Breast epithelium (tissue), 4 donors: ENCODE measurements at regions of chr2 and their contacts with region 1.

Region 1: GRCh38 chr2:121228521-121228920 is 56.5 kb downstream of the TFCP2L1 start:
- DNase-seq: no peak
- H3K4me3 ChIP-seq: no peak overlapping the region
- H3K27ac ChIP-seq: no peak overlapping the region
- H3K4me1 ChIP-seq: no peaks in the 10 kb centered on the region
- H3K27me3 ChIP-seq: no peaks in the 10 kb centered on the region
- CTCF ChIP-seq: no peak
- POLR2A ChIP-seq: no peak

Region 2: GRCh38 chr2:121254748-121255147 is 26.2 kb after region 1 on chr2:
- intact Hi-C with region 1: no loop called
- DNase-seq: no peak
- H3K4me3 ChIP-seq: no peak overlapping the region
- H3K27ac ChIP-seq: peak overlapping the region in 1 of 2 donors; percentile 23
- H3K4me1 ChIP-seq: no peaks in the 10 kb centered on the region
- H3K27me3 ChIP-seq: no peaks in the 10 kb centered on the region
- CTCF ChIP-seq: no peak
- POLR2A ChIP-seq: no peak

Region 3: GRCh38 chr2:122875091-122875865 is 1646.8 kb after region 1 on chr2:
- intact Hi-C with region 1: loop called (anchors 5 kb)
- DNase-seq: no peak
- H3K4me3 ChIP-seq: no peak overlapping the region
- H3K27ac ChIP-seq: no peak overlapping the region
- H3K4me1 ChIP-seq: no peaks in the 10 kb centered on the region
- H3K27me3 ChIP-seq: no peaks in the 10 kb centered on the region
- CTCF ChIP-seq: no peak
- POLR2A ChIP-seq: no peak